ENCODE measurements at regions of chr12 and their contacts with region 1.

Region 1: DNA sequence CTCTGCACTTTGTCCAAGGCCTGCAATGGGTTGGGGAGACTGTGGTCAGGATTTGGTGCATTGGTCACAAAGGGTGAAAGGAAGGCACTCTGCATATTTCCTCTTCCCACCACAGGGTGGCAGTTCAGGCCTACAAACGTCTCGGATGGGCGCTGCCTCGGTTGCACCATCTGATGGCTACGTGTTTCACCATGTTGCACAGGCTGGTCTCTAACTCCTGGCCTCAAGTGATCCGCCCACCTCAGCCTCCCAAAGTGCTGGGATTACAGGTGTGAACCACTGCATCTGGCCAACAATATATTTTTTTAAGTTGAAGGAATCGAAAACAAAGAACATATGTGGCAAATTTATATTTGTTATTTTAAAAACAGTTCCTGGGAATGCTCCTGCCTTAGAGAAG is 35.1 kb downstream of the TMBIM6 start:
- DNase-seq: peak; percentile 79
- ATAC-seq: peak; percentile 97
- H3K4me3 ChIP-seq: no peak overlapping the region
- H3K27ac ChIP-seq: no peak overlapping the region
- H3K4me1 ChIP-seq: no peaks in the 10 kb centered on the region
- H3K27me3 ChIP-seq: peaks cover 4% of the 10 kb centered on the region; the same call in 1 of the 2 replicates
- CTCF ChIP-seq: peak; percentile 86
- POLR2A ChIP-seq: no peak
- RAD21 ChIP-seq: peak; percentile 93

Region 2: DNA sequence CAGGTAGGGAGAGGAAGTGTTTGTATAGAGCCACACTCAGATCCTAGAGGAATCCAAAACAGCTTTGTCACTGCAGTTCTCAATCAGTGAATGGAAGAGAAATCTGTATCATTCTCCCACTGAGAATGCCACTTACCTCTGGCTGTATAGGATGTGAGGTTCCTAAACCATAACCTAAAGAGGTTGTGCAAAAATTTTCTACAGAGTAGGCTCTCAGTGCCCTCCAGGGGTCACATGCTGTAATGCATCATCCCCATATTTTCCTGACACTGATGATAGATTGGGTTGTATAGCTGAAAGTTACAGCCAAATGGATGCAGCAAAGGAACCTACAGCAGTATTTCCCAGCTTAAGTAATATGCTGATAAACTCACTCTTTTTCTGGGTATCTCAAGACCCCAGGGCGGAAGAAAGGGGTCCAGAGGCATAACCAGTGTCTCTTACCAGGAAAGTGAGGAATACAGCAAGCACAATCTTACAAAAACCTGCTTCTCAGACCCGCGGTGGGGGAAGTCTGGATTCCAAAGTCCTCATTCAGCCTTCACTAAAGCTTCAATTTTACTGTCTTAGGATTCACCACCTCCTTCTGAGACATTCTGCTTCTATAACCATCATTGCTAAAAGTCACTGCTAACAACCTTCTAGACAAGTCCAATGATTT is 62.7 kb after region 1 on chr12:
- CTCF ChIA-PET with region 1: interaction called, 13 read pairs
- POLR2A ChIA-PET with region 1: no interaction called
- dilution Hi-C with region 1: no loop called
- in situ Hi-C with region 1: loop called (anchors 5 kb)
- intact Hi-C with region 1: loop called (anchors 1 kb)
- DNase-seq: peak; percentile 35
- ATAC-seq: peak; percentile 33
- H3K4me3 ChIP-seq: no peak overlapping the region
- H3K27ac ChIP-seq: no peak overlapping the region
- H3K4me1 ChIP-seq: peaks cover 5% of the 10 kb centered on the region
- H3K27me3 ChIP-seq: no peaks in the 10 kb centered on the region
- CTCF ChIP-seq: peak; percentile 70
- POLR2A ChIP-seq: no peak
- RAD21 ChIP-seq: peak; percentile 81

Region 3: GRCh38 chr12:50006789-50007436 is 230.5 kb after region 1 on chr12:
- CTCF ChIA-PET with region 1: no interaction called
- POLR2A ChIA-PET with region 1: no interaction called
- dilution Hi-C with region 1: no loop called
- in situ Hi-C with region 1: no loop called
- intact Hi-C with region 1: no loop called
- DNase-seq: peak; percentile 49
- ATAC-seq: peak; percentile 14; the same call in 1 of the 2 replicates
- H3K4me3 ChIP-seq: no peak overlapping the region
- H3K27ac ChIP-seq: no peak overlapping the region
- H3K4me1 ChIP-seq: peaks cover 5% of the 10 kb centered on the region
- H3K27me3 ChIP-seq: no peaks in the 10 kb centered on the region
- CTCF ChIP-seq: no peak
- POLR2A ChIP-seq: no peak
- RAD21 ChIP-seq: no peak

Region 4: GRCh38 chr12:50066433-50066832 is 290.0 kb after region 1 on chr12:
- CTCF ChIA-PET with region 1: no interaction called
- POLR2A ChIA-PET with region 1: no interaction called
- dilution Hi-C with region 1: no loop called
- in situ Hi-C with region 1: loop called (anchors 5 kb)
- intact Hi-C with region 1: no loop called
- DNase-seq: peak; percentile 90
- ATAC-seq: peak; percentile 84
- H3K4me3 ChIP-seq: no peak overlapping the region
- H3K27ac ChIP-seq: peak overlapping the region; percentile 61
- H3K4me1 ChIP-seq: peaks cover 10% of the 10 kb centered on the region
- H3K27me3 ChIP-seq: no peaks in the 10 kb centered on the region
- CTCF ChIP-seq: no peak
- POLR2A ChIP-seq: no peak
- RAD21 ChIP-seq: no peak